H1 (cell line): ENCODE measurements at regions of chr13 and their contacts with region 1.

Region 1: GRCh38 chr13:34410678-34411077 is 531.4 kb upstream of the NBEA start:
- DNase-seq: no peak
- H3K4me3 ChIP-seq: no peak overlapping the region
- H3K27ac ChIP-seq: no peak overlapping the region
- H3K4me1 ChIP-seq: no peaks in the 10 kb centered on the region
- H3K27me3 ChIP-seq: no peaks in the 10 kb centered on the region
- CTCF ChIP-seq: no peak
- EP300 ChIP-seq: no peak
- POLR2A ChIP-seq: no peak
- RAD21 ChIP-seq: no peak

Region 2: DNA sequence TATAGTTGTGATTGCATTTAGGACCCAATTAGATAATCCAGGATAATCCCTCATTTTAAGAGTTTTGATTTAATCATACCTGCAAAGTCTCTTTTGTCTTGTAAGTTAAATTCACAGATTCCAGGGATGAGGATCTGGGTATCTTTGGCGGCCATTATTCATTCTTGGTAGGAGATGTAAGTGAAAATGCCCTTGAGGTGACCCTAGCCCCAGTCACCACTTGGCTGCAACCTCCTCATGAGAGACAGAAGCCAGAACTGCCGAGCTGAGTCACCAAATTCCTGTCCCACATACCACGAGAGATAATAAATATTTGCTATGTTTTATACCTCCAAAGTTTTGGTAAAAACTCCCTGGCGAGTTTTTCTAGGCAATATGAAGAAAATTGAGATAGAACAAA is 203.3 kb before region 1 on chr13:
- CTCF ChIA-PET with region 1: no interaction called
- POLR2A ChIA-PET with region 1: no interaction called
- DNase-seq: no peak
- H3K4me3 ChIP-seq: no peak overlapping the region
- H3K27ac ChIP-seq: no peak overlapping the region
- H3K4me1 ChIP-seq: no peaks in the 10 kb centered on the region
- H3K27me3 ChIP-seq: no peaks in the 10 kb centered on the region
- CTCF ChIP-seq: no peak
- EP300 ChIP-seq: no peak
- POLR2A ChIP-seq: no peak
- RAD21 ChIP-seq: no peak

Region 3: GRCh38 chr13:34421347-34421719 is 10.7 kb after region 1 on chr13:
- CTCF ChIA-PET with region 1: interaction called, 12 read pairs
- POLR2A ChIA-PET with region 1: no interaction called
- DNase-seq: no peak
- H3K4me3 ChIP-seq: no peak overlapping the region
- H3K27ac ChIP-seq: no peak overlapping the region
- H3K4me1 ChIP-seq: peaks cover 0 to 4% (median 1%) of the 10 kb centered on the region in 4 experiments; a peak in 1 of 7 replicates
- H3K27me3 ChIP-seq: no peaks in the 10 kb centered on the region
- CTCF ChIP-seq: peak in 1 of 3 experiments; percentile 27; a peak in 2 of 4 replicates
- EP300 ChIP-seq: no peak
- POLR2A ChIP-seq: no peak
- RAD21 ChIP-seq: peak; percentile 19 to 25; a peak in 2 of 4 replicates